ENCODE measurements at regions of chr2 and their contacts with region 1.

Region 1: GRCh38 chr2:177148477-177149154 is 64.0 kb upstream of the HNRNPA3 start:
- DNase-seq: peak; percentile 75 to 83
- H3K4me3 ChIP-seq: no peak overlapping the region
- H3K4me3 Mint-ChIP-seq: peak overlapping the region; percentile 45
- H3K27ac Mint-ChIP-seq: no peak overlapping the region
- H3K4me1 ChIP-seq: no peaks in the 10 kb centered on the region
- H3K4me1 Mint-ChIP-seq: no peaks in the 10 kb centered on the region
- H3K27me3 ChIP-seq: no peaks in the 10 kb centered on the region
- H3K27me3 Mint-ChIP-seq: peaks cover 30% of the 10 kb centered on the region
- CTCF ChIP-seq: peak; percentile 80 to 95

Region 2: DNA sequence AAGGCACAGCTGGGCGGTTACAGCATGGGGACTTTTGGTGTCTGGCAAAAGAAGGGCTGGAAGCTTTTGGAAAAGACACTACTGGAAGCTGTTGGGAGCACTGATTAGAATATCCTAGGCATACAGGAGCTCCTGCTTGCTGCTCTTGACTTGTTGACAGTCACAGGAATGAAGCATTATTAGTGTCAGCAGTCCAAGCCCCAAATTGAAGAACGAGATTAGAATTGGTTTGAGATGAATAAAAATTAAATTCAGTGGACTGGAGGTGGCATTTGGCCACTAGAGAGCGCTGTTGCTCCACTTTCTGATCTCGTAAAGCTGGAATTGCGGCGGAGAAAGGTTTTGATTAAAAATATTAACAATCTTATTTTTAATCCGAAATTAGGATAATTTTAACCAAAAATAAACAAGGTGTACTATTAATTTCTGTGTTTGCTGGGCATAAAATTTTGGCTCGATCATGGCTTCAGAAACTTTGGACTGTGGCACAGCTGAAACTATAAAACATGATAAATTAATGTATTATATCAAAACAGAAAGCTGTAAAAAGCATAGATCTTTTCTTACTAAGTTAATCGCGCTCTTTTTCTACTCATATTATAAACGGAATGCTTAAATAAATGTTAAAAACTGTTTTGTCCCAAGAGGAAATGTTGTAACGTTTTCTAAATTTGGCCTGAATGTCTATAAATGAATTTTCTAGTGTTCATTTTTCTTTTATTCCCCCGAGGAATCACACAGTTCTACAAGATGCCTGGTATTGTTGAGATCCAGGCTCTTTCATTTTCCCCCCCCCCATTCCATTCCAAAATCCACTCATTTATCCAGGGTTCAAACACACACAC is 1021.5 kb before region 1 on chr2:
- CTCF ChIA-PET with region 1: no interaction called
- POLR2A ChIA-PET with region 1: no interaction called
- intact Hi-C with region 1: loop called (anchors 2 kb)
- DNase-seq: peak in 1 of 2 experiments; percentile 67
- H3K4me3 ChIP-seq: no peak overlapping the region
- H3K4me3 Mint-ChIP-seq: no peak overlapping the region
- H3K27ac Mint-ChIP-seq: no peak overlapping the region
- H3K4me1 ChIP-seq: peaks cover 29% of the 10 kb centered on the region
- H3K4me1 Mint-ChIP-seq: peaks cover 24% of the 10 kb centered on the region
- H3K27me3 ChIP-seq: peaks cover 19% of the 10 kb centered on the region
- H3K27me3 Mint-ChIP-seq: peaks cover 63% of the 10 kb centered on the region
- CTCF ChIP-seq: peak; percentile 72 to 82

Region 3: GRCh38 chr2:176814306-176815052 is 334.1 kb before region 1 on chr2:
- CTCF ChIA-PET with region 1: interaction called, 3 read pairs
- POLR2A ChIA-PET with region 1: no interaction called
- intact Hi-C with region 1: loop called (anchors 5 kb)
- DNase-seq: peak in 1 of 2 experiments; percentile 12
- H3K4me3 ChIP-seq: no peak overlapping the region
- H3K4me3 Mint-ChIP-seq: no peak overlapping the region
- H3K27ac Mint-ChIP-seq: no peak overlapping the region
- H3K4me1 ChIP-seq: no peaks in the 10 kb centered on the region
- H3K4me1 Mint-ChIP-seq: no peaks in the 10 kb centered on the region
- H3K27me3 ChIP-seq: no peaks in the 10 kb centered on the region
- H3K27me3 Mint-ChIP-seq: peaks cover 3% of the 10 kb centered on the region
- CTCF ChIP-seq: peak in 1 of 2 experiments; percentile 56

Region 4: DNA sequence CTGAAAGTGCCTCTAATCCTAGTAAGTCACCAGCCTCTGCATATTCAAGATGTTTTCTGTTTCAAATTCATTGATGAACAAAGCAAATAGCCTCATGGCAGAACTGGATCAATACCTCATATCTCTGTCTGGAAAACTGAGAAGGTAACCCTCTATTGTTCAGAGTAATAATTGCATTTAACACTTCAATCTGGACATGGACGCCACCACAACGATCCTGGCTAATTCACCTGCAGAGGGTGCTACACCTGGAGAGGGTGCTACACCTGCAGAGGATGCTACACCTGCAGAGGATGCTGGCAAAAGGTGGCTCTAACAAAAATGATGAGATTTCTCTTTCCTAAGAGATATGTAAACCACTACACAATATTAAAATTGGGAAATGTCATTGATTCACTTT is 119.1 kb before region 1 on chr2:
- CTCF ChIA-PET with region 1: no interaction called
- POLR2A ChIA-PET with region 1: no interaction called
- intact Hi-C with region 1: loop called (anchors 1 kb)
- DNase-seq: peak; percentile 46 to 53
- H3K4me3 ChIP-seq: no peak overlapping the region
- H3K4me3 Mint-ChIP-seq: no peak overlapping the region
- H3K27ac Mint-ChIP-seq: no peak overlapping the region
- H3K4me1 ChIP-seq: no peaks in the 10 kb centered on the region
- H3K4me1 Mint-ChIP-seq: no peaks in the 10 kb centered on the region
- H3K27me3 ChIP-seq: peaks cover 1% of the 10 kb centered on the region; the same call in 1 of the 2 replicates
- H3K27me3 Mint-ChIP-seq: peaks cover 20% of the 10 kb centered on the region
- CTCF ChIP-seq: peak in 1 of 2 experiments; percentile 38

Region 5: DNA sequence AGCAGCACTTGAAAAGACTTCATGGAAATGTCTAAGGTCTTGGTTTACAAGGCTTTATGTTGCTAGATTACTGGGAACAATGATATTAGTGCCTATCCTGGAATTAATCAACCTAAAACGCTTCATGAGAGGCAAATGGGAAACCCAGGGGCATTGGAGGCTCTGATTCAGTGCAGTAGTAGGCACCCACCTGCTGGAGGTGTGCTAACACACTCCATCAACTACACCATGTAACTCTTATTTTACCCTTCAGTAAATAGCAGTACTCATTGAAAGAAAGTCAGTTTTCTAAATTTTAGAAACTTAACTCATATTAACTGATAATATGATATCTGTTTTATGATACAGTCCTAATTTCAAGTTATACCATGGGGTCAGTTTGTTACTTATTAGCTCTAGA is 46.6 kb after region 1 on chr2:
- CTCF ChIA-PET with region 1: interaction called, 10 read pairs
- POLR2A ChIA-PET with region 1: no interaction called
- intact Hi-C with region 1: no loop called
- DNase-seq: no peak
- H3K4me3 ChIP-seq: no peak overlapping the region
- H3K4me3 Mint-ChIP-seq: no peak overlapping the region
- H3K27ac Mint-ChIP-seq: no peak overlapping the region
- H3K4me1 ChIP-seq: no peaks in the 10 kb centered on the region
- H3K4me1 Mint-ChIP-seq: no peaks in the 10 kb centered on the region
- H3K27me3 ChIP-seq: no peaks in the 10 kb centered on the region
- H3K27me3 Mint-ChIP-seq: no peaks in the 10 kb centered on the region
- CTCF ChIP-seq: peak in 1 of 2 experiments; percentile 3

Measured in Caco-2 (cell line).